GM12878 (cell line): ENCODE measurements at regions of chr5 and their contacts with region 1.

Region 1: DNA sequence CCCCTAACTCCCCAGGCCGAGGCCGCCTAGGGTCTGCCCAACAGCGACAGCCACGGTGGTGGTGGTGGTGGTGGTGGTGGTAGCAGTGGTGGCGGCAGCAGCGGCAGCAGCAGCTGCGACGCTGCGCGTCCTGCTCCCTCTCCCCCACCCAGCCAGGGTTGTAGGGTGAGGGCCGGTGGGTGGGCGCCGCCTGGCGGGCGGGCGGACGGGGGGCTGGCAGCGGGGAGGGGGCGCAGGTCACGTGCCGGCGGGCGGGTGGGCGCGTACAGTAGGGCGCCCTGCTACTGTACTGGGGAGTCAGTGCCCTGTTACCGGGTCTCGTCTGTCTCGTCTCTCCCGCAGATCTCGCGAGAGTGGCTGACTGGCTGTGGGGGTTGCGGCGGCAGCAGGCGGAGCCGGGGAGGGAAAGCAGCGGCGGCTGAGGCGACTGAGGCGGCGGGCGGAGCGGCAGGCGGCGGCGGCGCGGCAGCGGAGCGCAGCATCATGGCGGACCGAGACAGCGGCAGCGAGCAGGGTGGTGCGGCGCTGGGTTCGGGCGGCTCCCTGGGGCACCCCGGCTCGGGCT is at the start of gene PURA:
- DNase-seq: peak; percentile 82
- ATAC-seq: peak; percentile 85
- H3K4me3 ChIP-seq: peak within 1 kb of the TSS; percentile 93
- H3K27ac ChIP-seq: peak within 1 kb of the TSS; percentile 83
- H3K4me1 ChIP-seq: peaks cover 19% of the 10 kb centered on the region
- H3K27me3 ChIP-seq: no peaks in the 10 kb centered on the region
- CTCF ChIP-seq: peak in 2 of 3 experiments; percentile 14 to 23; a peak in 2 of 6 replicates
- EP300 ChIP-seq: no peak
- POLR2A ChIP-seq: peak; percentile 86
- RAD21 ChIP-seq: no peak; the same call in 1 of the 2 replicates
- polyA plus RNA-seq, gene PURA: 3.7 to 4.1 TPM

Region 2: GRCh38 chr5:139711067-139711905 is 402.5 kb before region 1 on chr5:
- CTCF ChIA-PET with region 1: no interaction called
- POLR2A ChIA-PET with region 1: no interaction called
- RAD21 ChIA-PET with region 1: no interaction called
- SMC1A ChIA-PET with region 1: no interaction called
- in situ Hi-C with region 1: no loop called
- intact Hi-C with region 1: no loop called
- DNase-seq: no peak
- ATAC-seq: peak; percentile 72
- H3K4me3 ChIP-seq: peak overlapping the region; percentile 75
- H3K27ac ChIP-seq: no peak overlapping the region
- H3K4me1 ChIP-seq: peaks cover 21% of the 10 kb centered on the region
- H3K27me3 ChIP-seq: peaks cover 5 to 6% of the 10 kb centered on the region in 2 experiments; a peak in 3 of 4 replicates
- CTCF ChIP-seq: peak; percentile 4 to 38 (median 29); a peak in 3 of 6 replicates
- EP300 ChIP-seq: no peak
- POLR2A ChIP-seq: no peak
- RAD21 ChIP-seq: peak; percentile 39

Region 3: GRCh38 chr5:139844472-139845145 is 269.2 kb before region 1 on chr5:
- CTCF ChIA-PET with region 1: no interaction called
- POLR2A ChIA-PET with region 1: no interaction called
- RAD21 ChIA-PET with region 1: no interaction called
- SMC1A ChIA-PET with region 1: no interaction called
- in situ Hi-C with region 1: no loop called
- intact Hi-C with region 1: no loop called
- DNase-seq: peak; percentile 23
- ATAC-seq: peak; percentile 82
- H3K4me3 ChIP-seq: no peak overlapping the region
- H3K27ac ChIP-seq: no peak overlapping the region
- H3K4me1 ChIP-seq: peaks cover 12% of the 10 kb centered on the region
- H3K27me3 ChIP-seq: no peaks in the 10 kb centered on the region; a peak in 1 of 4 replicates
- CTCF ChIP-seq: peak; percentile 85 to 93 (median 89)
- EP300 ChIP-seq: no peak
- POLR2A ChIP-seq: no peak
- RAD21 ChIP-seq: peak; percentile 82

Region 4: DNA sequence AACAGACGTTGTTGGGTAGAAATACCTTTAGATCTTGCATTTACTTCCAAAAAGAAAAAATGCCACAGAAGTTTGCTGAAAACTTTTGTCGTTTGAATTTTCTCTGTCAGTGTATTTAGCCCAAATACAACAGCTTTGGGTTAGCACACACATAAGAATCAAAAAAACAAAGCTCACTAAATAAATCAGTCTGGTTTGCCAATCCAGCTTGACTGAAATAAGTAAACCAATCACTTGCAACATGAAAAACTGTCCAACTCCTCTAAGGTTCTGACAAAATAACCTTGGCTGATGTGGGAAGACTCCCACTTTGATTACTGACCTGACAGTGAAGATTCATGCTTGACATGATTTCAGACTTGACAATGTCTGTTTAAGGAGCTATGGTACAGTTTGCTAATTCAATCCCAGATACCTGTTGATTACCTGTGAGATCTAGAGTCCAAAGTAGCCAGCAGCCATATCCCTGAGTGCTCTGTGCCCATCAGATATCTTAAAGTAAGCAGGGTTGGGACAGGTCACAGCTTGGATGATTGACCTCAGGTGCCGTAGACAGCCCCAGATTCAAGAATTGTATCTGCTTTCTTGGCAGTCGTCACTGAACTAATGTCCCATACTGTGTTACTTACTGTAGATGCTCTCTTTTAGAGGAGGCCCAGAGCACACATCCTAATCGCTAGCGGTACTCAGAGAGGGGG is 12.7 kb after region 1 on chr5:
- CTCF ChIA-PET with region 1: interaction called, 12 read pairs
- POLR2A ChIA-PET with region 1: interaction called, 5 read pairs
- RAD21 ChIA-PET with region 1: interaction called, 8 read pairs
- SMC1A ChIA-PET with region 1: interaction called, 25 read pairs
- in situ Hi-C with region 1: no loop called
- intact Hi-C with region 1: no loop called
- DNase-seq: no peak
- ATAC-seq: no peak
- H3K4me3 ChIP-seq: no peak overlapping the region
- H3K27ac ChIP-seq: no peak overlapping the region
- H3K4me1 ChIP-seq: peaks cover 4% of the 10 kb centered on the region
- H3K27me3 ChIP-seq: no peaks in the 10 kb centered on the region
- CTCF ChIP-seq: no peak
- EP300 ChIP-seq: no peak
- POLR2A ChIP-seq: no peak
- RAD21 ChIP-seq: no peak